ENCODE measurements at regions of chr12 and their contacts with region 1.

Region 1: DNA sequence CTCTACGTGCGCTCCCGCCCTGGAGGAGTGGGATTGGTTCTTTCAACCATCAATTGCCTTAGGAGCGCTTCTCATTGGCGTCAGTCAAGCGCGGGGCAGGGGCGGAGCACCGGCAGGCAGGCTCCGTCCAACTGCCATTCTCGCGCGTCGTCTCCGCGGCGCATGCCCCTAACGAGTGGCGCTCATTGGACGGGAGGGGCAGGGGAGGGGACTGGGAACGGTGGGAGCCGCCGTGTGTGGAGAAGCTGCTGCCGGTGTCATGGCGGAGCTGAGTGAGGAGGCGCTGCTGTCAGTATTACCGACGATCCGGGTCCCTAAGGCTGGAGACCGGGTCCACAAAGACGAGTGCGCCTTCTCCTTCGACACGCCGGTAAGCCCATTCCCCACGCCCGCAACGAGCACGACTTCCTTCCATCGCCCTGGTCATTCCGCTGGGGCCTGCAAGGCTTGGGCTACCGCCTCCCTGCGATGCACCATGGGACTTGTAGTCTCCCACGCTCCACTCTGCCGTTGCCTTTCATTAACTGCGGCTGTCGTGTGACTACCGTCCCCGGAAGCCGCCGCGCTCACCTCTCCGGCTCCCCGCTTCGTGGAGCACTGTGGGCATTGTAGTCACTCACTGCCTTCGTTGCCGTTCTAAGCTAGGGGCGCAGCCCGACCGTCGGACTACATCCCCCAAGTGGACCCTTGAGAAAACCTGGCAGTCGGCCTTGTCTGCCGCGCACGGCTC is at the start of gene USP5:
- DNase-seq: peak; percentile 99
- H3K4me3 Mint-ChIP-seq: peak within 1 kb of the TSS; percentile 95
- H3K27ac Mint-ChIP-seq: peak within 1 kb of the TSS; percentile 98
- H3K4me1 Mint-ChIP-seq: peaks cover 29% of the 10 kb centered on the region
- H3K27me3 Mint-ChIP-seq: no peaks in the 10 kb centered on the region
- total RNA-seq, gene USP5: 125 to 130 TPM

Region 2: DNA sequence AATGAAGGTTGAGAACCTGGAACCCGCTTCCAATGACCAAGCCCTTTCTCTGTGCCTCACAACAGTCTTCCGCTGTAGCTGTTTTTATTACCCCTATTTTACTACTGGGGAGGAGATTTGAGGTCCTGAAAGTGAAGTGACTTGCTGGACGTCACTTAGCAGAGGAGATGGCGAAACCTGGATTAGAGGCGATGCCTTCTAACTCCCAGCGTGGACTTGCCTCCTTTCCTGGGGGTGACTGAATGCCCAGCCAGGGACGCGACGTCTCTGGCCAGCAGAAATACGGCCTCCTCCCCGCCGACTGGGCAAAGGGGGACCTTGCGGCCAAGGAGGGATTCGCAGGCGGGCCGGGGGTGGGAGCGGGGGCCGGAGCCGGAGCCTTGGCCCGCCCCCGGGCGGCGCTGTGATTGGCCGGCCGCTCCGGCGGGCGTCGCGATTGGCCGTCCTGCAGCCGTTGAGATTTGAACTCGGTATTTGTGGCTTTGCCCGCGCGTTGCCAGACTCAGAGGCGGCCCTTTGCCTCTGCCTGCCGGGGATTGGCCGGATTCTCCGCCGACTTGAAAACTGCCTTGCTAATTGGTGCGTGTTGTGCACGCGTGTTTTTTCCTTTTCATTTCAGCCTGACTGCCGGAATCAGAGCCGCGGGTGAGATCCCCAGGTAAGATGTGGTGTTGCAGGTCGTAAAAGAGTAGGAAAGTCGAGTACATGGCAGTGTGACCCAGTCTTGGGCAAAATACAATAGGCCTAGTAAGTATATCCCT is 358.4 kb before region 1 on chr12 and contains the start of gene NCAPD2:
- CTCF ChIA-PET with region 1: interaction called, 3 read pairs
- POLR2A ChIA-PET with region 1: no interaction called
- intact Hi-C with region 1: loop called (anchors 1 kb)
- DNase-seq: peak; percentile 98
- H3K4me3 Mint-ChIP-seq: peak within 1 kb of the TSS; percentile 94
- H3K27ac Mint-ChIP-seq: peak within 1 kb of the TSS; percentile 100
- H3K4me1 Mint-ChIP-seq: peaks cover 38% of the 10 kb centered on the region
- H3K27me3 Mint-ChIP-seq: no peaks in the 10 kb centered on the region
- total RNA-seq, gene NCAPD2: 192 to 196 TPM

Region 3: DNA sequence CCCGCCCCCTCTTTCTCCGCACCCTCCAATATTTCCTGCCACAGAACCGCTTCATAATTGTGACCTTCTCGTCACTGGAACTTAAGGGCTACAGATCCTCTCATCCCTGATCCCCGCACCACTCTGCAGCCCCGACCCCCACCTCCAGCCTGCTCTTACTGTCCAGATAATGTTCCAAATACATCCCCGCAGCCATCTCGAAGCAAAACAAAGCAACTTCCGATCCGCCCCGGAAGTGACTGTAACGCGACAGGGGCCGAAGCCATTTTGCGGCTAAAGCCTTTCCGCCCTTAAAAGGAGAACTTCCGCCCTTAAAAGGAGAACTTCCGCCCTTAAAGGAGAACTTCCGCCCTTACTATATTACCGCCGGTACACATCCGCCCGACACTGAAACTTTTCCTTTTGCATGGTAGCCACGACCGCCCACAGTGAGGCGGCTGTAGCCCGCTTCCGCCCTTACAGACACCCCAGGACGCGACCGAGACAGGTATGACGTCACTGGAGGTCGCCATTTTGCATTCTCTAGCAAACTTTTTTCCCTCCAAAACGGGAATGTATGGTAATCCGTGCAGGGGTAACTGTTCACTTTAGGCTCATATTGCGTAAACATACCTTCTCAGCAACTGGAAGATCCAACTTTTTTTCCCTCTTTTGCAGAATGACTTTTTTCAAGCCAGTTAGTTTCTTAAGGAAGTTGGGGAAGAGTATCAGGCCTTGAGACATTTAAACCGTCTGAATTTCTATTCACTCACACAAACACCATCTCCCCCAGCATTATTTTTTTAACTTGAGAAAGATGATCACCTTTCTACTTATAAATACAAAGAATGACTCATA is 189.0 kb before region 1 on chr12 and contains the start of gene ING4:
- CTCF ChIA-PET with region 1: no interaction called
- POLR2A ChIA-PET with region 1: no interaction called
- intact Hi-C with region 1: loop called (anchors 1 kb)
- DNase-seq: peak; percentile 98
- H3K4me3 Mint-ChIP-seq: peak within 1 kb of the TSS; percentile 91
- H3K27ac Mint-ChIP-seq: peak within 1 kb of the TSS; percentile 83
- H3K4me1 Mint-ChIP-seq: peaks cover 22% of the 10 kb centered on the region
- H3K27me3 Mint-ChIP-seq: no peaks in the 10 kb centered on the region
- total RNA-seq, gene ING4: 13.8 to 15.2 TPM

Region 4: DNA sequence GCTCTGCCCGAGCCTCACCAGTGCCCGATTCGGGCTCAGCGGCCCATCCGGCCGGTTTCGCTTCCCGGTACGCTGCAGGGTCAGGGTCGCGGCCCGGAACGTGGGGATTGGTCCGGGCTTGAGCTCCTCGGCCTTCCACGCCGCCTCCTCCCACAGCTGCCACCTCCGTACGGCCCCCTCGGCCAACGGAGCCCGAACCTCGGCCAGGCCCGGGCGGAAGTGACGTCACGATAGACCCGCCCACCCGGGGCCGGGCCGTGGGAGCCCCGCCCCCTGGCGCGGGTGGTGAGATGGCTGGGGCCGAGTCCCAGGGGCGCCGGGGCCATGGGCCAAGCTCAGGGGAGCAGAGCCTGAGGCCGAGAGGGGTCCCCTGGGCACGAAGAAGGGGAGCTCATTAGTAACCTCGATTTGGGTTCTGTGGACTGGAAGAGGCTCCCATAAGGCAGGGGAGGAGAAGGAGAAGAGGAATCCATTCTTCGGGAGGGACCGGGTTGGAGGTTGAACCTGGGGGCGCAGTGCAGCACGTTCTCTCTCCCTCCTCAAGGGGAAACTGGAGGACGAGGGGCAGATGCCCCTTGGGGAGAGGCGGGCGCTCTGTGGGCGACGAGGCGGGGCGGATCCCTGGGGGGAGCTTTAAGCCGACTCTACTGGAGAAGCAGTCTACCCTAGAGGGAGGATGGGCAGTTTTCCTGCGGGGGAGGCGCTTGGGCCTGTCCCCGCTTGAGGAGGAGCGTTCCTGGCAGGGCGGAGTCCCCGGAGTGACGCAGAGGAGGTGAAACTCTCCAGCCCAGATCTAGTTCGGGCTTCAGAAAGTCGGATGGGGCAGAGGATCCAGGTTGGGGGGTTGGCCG is 98.9 kb before region 1 on chr12 and contains the start of gene MLF2:
- CTCF ChIA-PET with region 1: interaction called, 19 read pairs
- POLR2A ChIA-PET with region 1: interaction called, 10 read pairs
- intact Hi-C with region 1: loop called (anchors 1 kb)
- DNase-seq: peak; percentile 99
- H3K4me3 Mint-ChIP-seq: peak within 1 kb of the TSS; percentile 93
- H3K27ac Mint-ChIP-seq: peak within 1 kb of the TSS; percentile 96
- H3K4me1 Mint-ChIP-seq: peaks cover 24% of the 10 kb centered on the region
- H3K27me3 Mint-ChIP-seq: no peaks in the 10 kb centered on the region
- total RNA-seq, gene MLF2: 140 to 141 TPM

Region 5: GRCh38 chr12:6867413-6868210 is 15.5 kb after region 1 on chr12 and contains the start of gene TPI1:
- CTCF ChIA-PET with region 1: interaction called, 74 read pairs
- POLR2A ChIA-PET with region 1: interaction called, 94 read pairs
- intact Hi-C with region 1: loop called (anchors 1 kb)
- DNase-seq: peak; percentile 88
- H3K4me3 Mint-ChIP-seq: peak within 1 kb of the TSS; percentile 98
- H3K27ac Mint-ChIP-seq: peak within 1 kb of the TSS; percentile 98
- H3K4me1 Mint-ChIP-seq: peaks cover 54% of the 10 kb centered on the region
- H3K27me3 Mint-ChIP-seq: no peaks in the 10 kb centered on the region
- total RNA-seq, gene TPI1: 1,432 to 1,495 TPM

Region 6: GRCh38 chr12:6904280-6905278 is 52.5 kb after region 1 on chr12 and contains the start of gene LRRC23:
- CTCF ChIA-PET with region 1: no interaction called
- POLR2A ChIA-PET with region 1: no interaction called
- intact Hi-C with region 1: loop called (anchors 1 kb)
- DNase-seq: peak; percentile 99
- H3K4me3 Mint-ChIP-seq: no peak within 1 kb of the TSS
- H3K27ac Mint-ChIP-seq: no peak within 1 kb of the TSS
- H3K4me1 Mint-ChIP-seq: peaks cover 5% of the 10 kb centered on the region
- H3K27me3 Mint-ChIP-seq: no peaks in the 10 kb centered on the region
- total RNA-seq, gene LRRC23: 6.8 to 7.8 TPM

Region 7: GRCh38 chr12:6965026-6965661 is 113.1 kb after region 1 on chr12:
- CTCF ChIA-PET with region 1: interaction called, 8 read pairs
- POLR2A ChIA-PET with region 1: no interaction called
- intact Hi-C with region 1: loop called (anchors 1 kb)
- DNase-seq: peak; percentile 93
- H3K4me3 Mint-ChIP-seq: no peak overlapping the region
- H3K27ac Mint-ChIP-seq: peak overlapping the region; percentile 89
- H3K4me1 Mint-ChIP-seq: peaks cover 72% of the 10 kb centered on the region
- H3K27me3 Mint-ChIP-seq: no peaks in the 10 kb centered on the region

Region 8: DNA sequence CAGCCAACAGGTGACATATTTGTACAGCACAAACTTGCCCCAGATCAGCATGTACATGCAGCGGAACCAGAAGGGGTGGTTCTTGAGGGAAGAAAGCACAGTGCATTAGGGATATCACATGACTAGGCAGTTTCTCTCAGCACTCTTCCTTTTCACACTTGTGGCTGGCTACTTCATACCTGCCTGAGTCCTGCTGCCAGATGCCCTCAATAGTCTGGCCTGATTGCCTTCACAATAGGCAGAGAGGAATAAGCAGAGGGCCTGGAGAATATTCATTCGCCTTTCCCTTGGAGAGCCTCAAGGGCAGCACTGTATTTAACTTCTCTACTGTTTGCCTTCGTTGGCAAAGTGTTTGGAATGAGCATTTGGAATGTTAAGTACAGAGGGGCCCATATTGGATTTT is 126.5 kb after region 1 on chr12:
- CTCF ChIA-PET with region 1: no interaction called
- POLR2A ChIA-PET with region 1: no interaction called
- intact Hi-C with region 1: no loop called
- DNase-seq: no peak
- H3K4me3 Mint-ChIP-seq: no peak overlapping the region
- H3K27ac Mint-ChIP-seq: peak overlapping the region; percentile 19
- H3K4me1 Mint-ChIP-seq: peaks cover 3% of the 10 kb centered on the region
- H3K27me3 Mint-ChIP-seq: no peaks in the 10 kb centered on the region

Region 9: GRCh38 chr12:7075939-7076338 is 223.9 kb after region 1 on chr12:
- CTCF ChIA-PET with region 1: no interaction called
- POLR2A ChIA-PET with region 1: no interaction called
- intact Hi-C with region 1: no loop called
- DNase-seq: no peak
- H3K4me3 Mint-ChIP-seq: no peak overlapping the region
- H3K27ac Mint-ChIP-seq: no peak overlapping the region
- H3K4me1 Mint-ChIP-seq: peaks cover 5% of the 10 kb centered on the region
- H3K27me3 Mint-ChIP-seq: peaks cover 1% of the 10 kb centered on the region

Measured in activated CD4-positive, alpha-beta memory T cell treated with anti-CD3 and anti-CD28 coated beads for 36 hours (primary cell).